H1 (cell line): ENCODE measurements at regions of chr19 and their contacts with region 1.

Region 1: GRCh38 chr19:7149956-7150705 is 80.6 kb downstream of the ZNF557 start:
- DNase-seq: no peak
- H3K4me3 ChIP-seq: no peak overlapping the region
- H3K27ac ChIP-seq: no peak overlapping the region
- H3K4me1 ChIP-seq: no peaks in the 10 kb centered on the region
- H3K27me3 ChIP-seq: no peaks in the 10 kb centered on the region
- CTCF ChIP-seq: peak in 2 of 3 experiments; percentile 13 to 17; a peak in 2 of 4 replicates
- EP300 ChIP-seq: no peak
- POLR2A ChIP-seq: no peak
- RAD21 ChIP-seq: no peak

Region 2: GRCh38 chr19:7132054-7132453 is 18.1 kb before region 1 on chr19:
- CTCF ChIA-PET with region 1: interaction called, 20 read pairs
- POLR2A ChIA-PET with region 1: no interaction called
- DNase-seq: no peak
- H3K4me3 ChIP-seq: no peak overlapping the region
- H3K27ac ChIP-seq: no peak overlapping the region
- H3K4me1 ChIP-seq: no peaks in the 10 kb centered on the region
- H3K27me3 ChIP-seq: no peaks in the 10 kb centered on the region
- CTCF ChIP-seq: no peak
- EP300 ChIP-seq: no peak
- POLR2A ChIP-seq: no peak
- RAD21 ChIP-seq: no peak

Region 3: GRCh38 chr19:7139095-7139494 is 11.0 kb before region 1 on chr19:
- CTCF ChIA-PET with region 1: interaction called, 20 read pairs
- POLR2A ChIA-PET with region 1: no interaction called
- DNase-seq: no peak
- H3K4me3 ChIP-seq: no peak overlapping the region
- H3K27ac ChIP-seq: no peak overlapping the region
- H3K4me1 ChIP-seq: no peaks in the 10 kb centered on the region
- H3K27me3 ChIP-seq: no peaks in the 10 kb centered on the region
- CTCF ChIP-seq: no peak
- EP300 ChIP-seq: no peak
- POLR2A ChIP-seq: no peak
- RAD21 ChIP-seq: no peak

Region 4: DNA sequence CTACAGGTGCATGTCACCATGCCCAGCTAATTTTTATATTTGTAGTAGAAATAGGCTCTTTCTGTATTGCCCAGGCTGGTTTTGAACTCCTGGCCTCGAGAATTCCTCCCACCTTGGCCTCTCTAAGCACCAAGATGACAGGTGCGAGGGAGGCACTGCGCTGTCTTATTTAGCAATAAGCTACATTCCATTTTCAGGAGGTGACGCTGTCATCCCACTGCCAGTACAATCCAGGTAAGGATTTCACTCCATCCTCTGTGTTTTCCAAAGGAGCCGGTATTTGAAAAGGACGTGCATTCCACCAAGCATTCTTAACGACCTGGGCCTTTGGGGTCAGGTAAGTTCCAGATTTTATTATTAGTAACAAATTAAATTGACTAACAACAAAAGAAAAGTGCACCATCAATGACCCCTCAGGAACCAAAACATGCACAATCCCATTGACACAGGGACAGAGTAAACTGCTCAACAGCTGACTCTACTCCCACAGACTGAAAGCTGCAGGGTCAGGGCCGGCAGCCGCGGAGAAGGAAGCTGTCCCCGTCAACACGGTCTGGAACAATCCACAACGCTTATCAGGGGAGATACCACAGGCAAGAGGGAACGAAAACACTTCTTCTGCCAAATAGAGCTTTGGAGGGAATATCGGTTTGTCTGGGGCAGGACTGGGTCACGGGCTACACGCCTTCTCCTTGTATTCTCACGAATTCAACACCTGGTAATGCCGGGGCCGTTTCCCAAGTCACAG is 61.2 kb after region 1 on chr19:
- CTCF ChIA-PET with region 1: no interaction called
- POLR2A ChIA-PET with region 1: no interaction called
- DNase-seq: no peak
- H3K4me3 ChIP-seq: no peak overlapping the region
- H3K27ac ChIP-seq: no peak overlapping the region
- H3K4me1 ChIP-seq: peaks cover 4 to 16% (median 9%) of the 10 kb centered on the region in 4 experiments
- H3K27me3 ChIP-seq: no peaks in the 10 kb centered on the region
- CTCF ChIP-seq: no peak
- EP300 ChIP-seq: no peak
- POLR2A ChIP-seq: no peak
- RAD21 ChIP-seq: no peak

Region 5: GRCh38 chr19:7247155-7247554 is 97.0 kb after region 1 on chr19:
- CTCF ChIA-PET with region 1: no interaction called
- POLR2A ChIA-PET with region 1: no interaction called
- DNase-seq: no peak
- H3K4me3 ChIP-seq: no peak overlapping the region
- H3K27ac ChIP-seq: no peak overlapping the region
- H3K4me1 ChIP-seq: no peaks in the 10 kb centered on the region
- H3K27me3 ChIP-seq: no peaks in the 10 kb centered on the region
- CTCF ChIP-seq: no peak
- EP300 ChIP-seq: no peak
- POLR2A ChIP-seq: no peak
- RAD21 ChIP-seq: no peak

Region 6: GRCh38 chr19:7340959-7341837 is 191.1 kb after region 1 on chr19:
- CTCF ChIA-PET with region 1: interaction called, 27 read pairs
- POLR2A ChIA-PET with region 1: no interaction called
- DNase-seq: peak; percentile 66 to 100
- H3K4me3 ChIP-seq: no peak overlapping the region
- H3K27ac ChIP-seq: no peak overlapping the region
- H3K4me1 ChIP-seq: no peaks in the 10 kb centered on the region
- H3K27me3 ChIP-seq: no peaks in the 10 kb centered on the region
- CTCF ChIP-seq: peak; percentile 73 to 97 (median 93)
- EP300 ChIP-seq: no peak
- POLR2A ChIP-seq: no peak
- RAD21 ChIP-seq: peak; percentile 99